GM18951 (cell line): ENCODE measurements at regions of chr17 and their contacts with region 1.

Region 1: DNA sequence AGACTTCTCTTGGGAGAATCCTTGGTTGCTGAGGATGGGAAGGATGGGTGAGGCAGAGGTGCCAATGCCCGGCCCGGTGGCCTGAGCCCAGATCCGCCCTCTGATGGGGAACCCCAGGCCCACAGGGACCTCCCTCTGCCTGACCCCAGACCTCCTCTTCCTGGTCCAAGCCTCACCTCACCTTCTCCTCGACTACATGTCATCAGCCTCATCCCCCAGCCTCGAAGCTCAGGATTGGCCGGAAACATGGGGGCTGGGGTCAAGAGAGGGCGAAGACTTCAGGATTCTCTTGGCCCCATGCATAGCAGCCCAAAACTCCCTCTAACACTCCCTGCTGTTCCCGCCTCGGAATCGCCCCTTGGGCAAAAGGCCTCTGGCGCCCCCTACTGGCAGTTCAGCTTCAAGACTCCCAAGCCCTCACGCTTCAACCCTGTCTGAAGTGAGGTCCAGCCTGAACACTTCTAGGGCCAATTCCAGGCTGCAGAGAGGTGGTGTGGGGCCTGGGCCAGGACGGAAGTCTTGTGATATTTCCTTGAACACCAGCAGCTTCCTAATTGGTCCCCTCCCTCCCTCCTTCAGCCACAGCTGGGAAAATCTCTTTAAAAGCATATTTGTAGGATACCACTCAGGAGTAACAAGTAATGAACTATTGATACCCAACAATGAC is 47.2 kb downstream of the ARHGAP27 start:
- POLR2A ChIP-seq: no peak

Region 2: DNA sequence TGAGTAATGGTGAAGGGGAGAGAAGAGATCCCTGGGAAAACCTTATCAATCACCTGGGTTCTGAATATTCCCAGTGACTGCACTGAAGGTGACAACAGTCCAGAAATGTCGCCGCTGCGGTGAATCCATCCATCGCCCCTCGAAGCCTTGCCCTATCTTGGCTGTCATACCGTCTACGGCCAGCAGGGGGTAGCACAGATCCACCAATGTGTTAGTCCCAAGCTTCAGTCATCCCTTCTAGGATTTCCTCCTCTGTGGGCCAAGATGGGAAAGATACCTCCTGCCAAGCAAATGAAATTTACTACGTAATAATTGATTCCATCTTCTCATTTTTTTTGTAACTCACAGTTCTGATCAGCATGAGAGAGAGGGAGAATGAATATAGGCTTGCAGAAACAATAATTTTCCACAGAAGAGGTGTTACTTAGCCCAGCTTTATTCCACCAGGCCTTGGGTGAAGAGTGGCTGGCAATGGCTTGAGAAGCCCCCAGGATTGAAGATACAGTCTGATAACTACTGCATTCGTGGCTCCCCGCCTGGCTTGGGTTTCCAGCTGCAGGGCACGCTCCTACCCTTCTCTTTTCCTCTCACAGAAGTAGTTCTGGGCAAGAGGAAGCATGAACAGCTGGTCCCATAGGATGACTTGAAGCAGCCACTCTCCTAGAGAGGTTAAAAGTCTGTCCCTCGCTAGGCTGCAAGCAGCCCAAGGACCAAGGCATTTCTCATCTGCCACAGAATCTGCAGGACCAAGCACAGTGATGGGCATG is 166.4 kb before region 1 on chr17:
- in situ Hi-C with region 1: loop called (anchors 5 kb)
- POLR2A ChIP-seq: no peak

Region 3: DNA sequence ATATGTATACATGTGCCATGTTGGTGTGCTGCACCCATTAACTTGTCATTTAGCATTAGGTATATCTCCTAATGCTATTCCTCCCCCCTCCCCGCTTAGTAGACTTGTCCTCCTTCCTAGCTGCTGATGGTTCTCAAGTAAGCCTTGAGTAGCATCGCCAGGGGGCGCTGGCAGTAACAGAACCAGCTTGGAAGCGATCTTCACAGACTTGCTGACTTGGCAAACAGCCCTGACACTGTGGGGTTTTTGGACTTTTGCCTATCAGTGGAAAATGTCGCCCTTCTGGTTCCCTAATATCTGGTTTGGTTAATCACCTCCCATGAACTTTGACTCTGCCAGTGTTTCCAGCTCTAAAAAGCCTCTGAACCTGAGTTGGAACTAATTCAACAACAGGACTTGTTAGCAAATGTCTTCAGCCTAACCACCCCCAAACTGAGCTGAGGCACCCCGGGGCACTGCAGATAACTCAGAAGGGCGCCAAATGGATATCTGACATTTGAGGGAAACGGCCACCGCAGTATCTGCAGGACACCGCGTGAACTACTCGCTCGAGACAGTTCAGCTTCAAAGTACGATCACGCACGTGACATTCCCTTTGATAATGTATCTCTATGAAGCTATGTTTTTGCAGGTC is 108.1 kb before region 1 on chr17:
- in situ Hi-C with region 1: loop called (anchors 5 kb)
- POLR2A ChIP-seq: no peak